ENCODE measurements at regions of chr22 and their contacts with region 1.

Region 1: GRCh38 chr22:31080848-31081649 is at the start of gene SMTN:
- DNase-seq: peak; percentile 95
- ATAC-seq: peak; percentile 72
- H3K4me3 Mint-ChIP-seq: peak within 1 kb of the TSS; percentile 79
- H3K27ac Mint-ChIP-seq: peak within 1 kb of the TSS; percentile 84
- H3K4me1 Mint-ChIP-seq: peaks cover 40% of the 10 kb centered on the region
- H3K27me3 Mint-ChIP-seq: peaks cover 11% of the 10 kb centered on the region
- CTCF ChIP-seq: no peak
- total RNA-seq, gene SMTN: 28.1 to 34.5 TPM (median 32.8 TPM) in 3 replicates

Region 2: DNA sequence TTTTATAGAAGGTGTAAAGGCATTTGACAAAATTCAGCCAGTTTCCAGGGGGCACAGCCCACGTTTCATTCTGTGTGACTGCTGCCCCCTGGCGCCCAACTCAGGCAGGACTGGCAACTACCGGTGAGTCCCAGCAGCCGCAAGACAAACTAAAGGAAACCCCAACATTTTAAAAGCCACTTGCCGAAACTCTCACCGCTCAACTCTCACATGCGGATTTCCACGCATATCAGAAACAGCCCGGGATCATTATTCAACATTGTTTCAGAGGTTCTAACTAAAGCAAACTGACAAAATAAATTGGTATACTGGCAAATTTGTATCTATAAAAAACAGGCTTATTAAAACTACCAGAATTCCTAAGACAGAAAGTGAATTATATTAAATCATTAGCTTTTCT is 160.6 kb before region 1 on chr22:
- CTCF ChIA-PET with region 1: interaction called, 11 read pairs
- POLR2A ChIA-PET with region 1: no interaction called
- DNase-seq: peak; percentile 88
- ATAC-seq: peak; percentile 83
- H3K4me3 Mint-ChIP-seq: no peak overlapping the region
- H3K27ac Mint-ChIP-seq: no peak overlapping the region
- H3K4me1 Mint-ChIP-seq: peaks cover 4% of the 10 kb centered on the region; the same call in 1 of the 2 replicates
- H3K27me3 Mint-ChIP-seq: peaks cover 2% of the 10 kb centered on the region; the same call in 1 of the 2 replicates
- CTCF ChIP-seq: peak; percentile 87

Region 3: DNA sequence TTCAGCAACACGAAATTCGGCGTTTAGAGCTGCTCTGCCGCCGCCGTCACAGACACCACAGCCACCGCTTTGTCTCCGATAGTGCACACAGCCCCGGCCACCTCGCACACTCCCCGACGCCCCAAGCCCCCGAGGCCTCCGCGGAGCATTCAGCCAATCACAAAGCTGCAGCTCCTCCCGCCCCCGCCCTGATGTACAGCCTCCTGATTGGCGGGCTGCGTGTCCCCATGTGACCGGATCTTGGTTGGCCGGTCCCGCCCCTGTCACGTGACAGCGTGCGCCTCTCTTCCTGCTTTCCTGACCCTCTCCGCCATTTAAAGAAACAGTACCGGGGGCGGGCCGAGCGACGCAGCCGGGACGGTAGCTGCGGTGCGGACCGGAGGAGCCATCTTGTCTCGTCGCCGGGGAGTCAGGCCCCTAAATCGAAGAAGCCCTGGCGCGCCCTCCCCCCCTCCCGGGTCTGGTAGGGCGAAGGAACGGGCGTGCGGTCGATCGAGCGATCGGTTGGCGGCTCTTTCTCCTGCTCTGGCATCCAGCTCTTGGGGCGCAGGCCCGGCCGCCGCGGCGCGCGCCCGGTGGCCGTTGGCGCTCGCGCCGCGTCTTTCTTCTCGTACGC is 112.0 kb before region 1 on chr22 and contains the start of gene TUG1:
- CTCF ChIA-PET with region 1: interaction called, 73 read pairs
- POLR2A ChIA-PET with region 1: interaction called, 43 read pairs
- DNase-seq: peak; percentile 97
- ATAC-seq: peak; percentile 93
- H3K4me3 Mint-ChIP-seq: peak within 1 kb of the TSS; percentile 88
- H3K27ac Mint-ChIP-seq: peak within 1 kb of the TSS; percentile 98
- H3K4me1 Mint-ChIP-seq: peaks cover 61% of the 10 kb centered on the region
- H3K27me3 Mint-ChIP-seq: no peaks in the 10 kb centered on the region
- CTCF ChIP-seq: no peak
- total RNA-seq, gene TUG1: 94.8 to 105 TPM (median 96.2 TPM) in 3 replicates

Region 4: DNA sequence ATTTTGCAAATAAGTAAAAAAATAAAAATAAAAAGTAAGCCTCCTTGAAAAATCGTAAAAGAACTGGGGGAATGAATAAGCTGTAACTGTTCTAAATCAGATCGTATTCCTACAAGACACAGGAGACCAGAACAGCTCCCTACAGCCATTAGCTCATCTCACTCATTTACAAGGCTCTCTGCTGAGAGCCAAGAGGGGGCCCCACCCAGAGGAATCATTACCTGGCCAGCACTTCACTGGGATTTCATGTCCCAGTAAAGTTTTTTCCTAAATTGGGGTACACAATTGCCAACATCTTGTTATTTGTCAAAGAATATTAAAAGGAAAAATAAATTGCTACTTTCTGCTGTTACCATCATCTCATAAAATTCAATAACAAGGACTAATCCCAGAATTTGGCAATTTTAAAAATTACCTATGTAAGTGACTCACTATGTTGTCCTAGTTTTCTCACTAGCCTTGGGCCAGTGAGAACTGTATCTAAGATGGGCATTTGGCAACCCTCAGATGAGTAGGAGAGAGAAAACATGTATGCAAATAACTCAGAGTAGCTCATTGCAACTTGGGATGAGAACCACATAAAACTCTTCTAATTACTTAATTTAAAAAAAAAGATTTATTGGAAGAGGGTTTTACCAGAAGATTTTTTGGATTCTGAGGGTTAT is 18.4 kb before region 1 on chr22:
- CTCF ChIA-PET with region 1: interaction called, 12 read pairs
- POLR2A ChIA-PET with region 1: interaction called, 3 read pairs
- DNase-seq: no peak
- ATAC-seq: no peak
- H3K4me3 Mint-ChIP-seq: no peak overlapping the region
- H3K27ac Mint-ChIP-seq: no peak overlapping the region
- H3K4me1 Mint-ChIP-seq: no peaks in the 10 kb centered on the region
- H3K27me3 Mint-ChIP-seq: no peaks in the 10 kb centered on the region
- CTCF ChIP-seq: no peak

Region 5: GRCh38 chr22:31107178-31107893 is 26.3 kb after region 1 on chr22 and contains the start of gene SELENOM:
- CTCF ChIA-PET with region 1: interaction called, 363 read pairs
- POLR2A ChIA-PET with region 1: interaction called, 8 read pairs
- DNase-seq: peak; percentile 95
- ATAC-seq: peak; percentile 85
- H3K4me3 Mint-ChIP-seq: peak within 1 kb of the TSS; percentile 74
- H3K27ac Mint-ChIP-seq: peak within 1 kb of the TSS; percentile 19; the same call in 1 of the 2 replicates
- H3K4me1 Mint-ChIP-seq: peaks cover 18% of the 10 kb centered on the region
- H3K27me3 Mint-ChIP-seq: peaks cover 49% of the 10 kb centered on the region
- CTCF ChIP-seq: peak; percentile 46
- total RNA-seq, gene SELENOM: 16.3 to 24.6 TPM (median 22.6 TPM) in 3 replicates